ENCODE measurements at regions of chr12 and their contacts with region 1.

Region 1: DNA sequence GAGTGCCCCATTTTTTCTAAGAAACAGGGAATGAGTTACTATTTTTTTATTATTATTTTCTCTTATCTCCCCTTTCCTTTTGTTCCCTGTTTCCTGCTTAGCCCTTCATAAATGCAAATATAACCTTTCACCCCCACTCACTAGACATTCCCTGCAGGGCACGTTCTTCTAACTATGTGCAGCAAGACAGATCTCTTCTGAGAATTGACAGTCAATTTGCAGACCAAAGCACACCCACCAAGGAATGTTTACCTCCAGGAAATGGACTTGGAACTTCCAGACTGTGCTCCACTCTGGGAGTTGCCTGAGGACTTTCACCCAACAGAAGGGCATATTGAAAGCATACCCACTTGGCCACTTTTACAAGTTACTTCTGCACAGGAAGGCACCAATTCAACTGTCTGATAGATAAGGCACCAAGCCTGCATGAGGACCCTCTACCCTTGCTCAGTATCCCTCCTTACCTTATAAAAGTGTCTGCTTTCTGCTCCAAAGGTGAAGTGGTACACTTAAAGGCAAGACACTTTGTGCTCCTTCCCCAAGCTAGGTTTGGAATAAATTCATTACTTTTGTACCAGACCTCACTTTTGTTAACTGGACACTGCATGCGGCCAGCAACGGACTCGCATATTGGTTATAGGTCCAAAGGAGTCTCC is 6.5 kb downstream of the TAS2R19 start:
- DNase-seq: no peak
- ATAC-seq: no peak
- H3K4me3 ChIP-seq: no peak overlapping the region
- H3K27ac ChIP-seq: no peak overlapping the region
- H3K4me1 ChIP-seq: no peaks in the 10 kb centered on the region
- H3K27me3 ChIP-seq: no peaks in the 10 kb centered on the region
- CTCF ChIP-seq: no peak
- POLR2A ChIP-seq: no peak
- RAD21 ChIP-seq: no peak

Region 2: DNA sequence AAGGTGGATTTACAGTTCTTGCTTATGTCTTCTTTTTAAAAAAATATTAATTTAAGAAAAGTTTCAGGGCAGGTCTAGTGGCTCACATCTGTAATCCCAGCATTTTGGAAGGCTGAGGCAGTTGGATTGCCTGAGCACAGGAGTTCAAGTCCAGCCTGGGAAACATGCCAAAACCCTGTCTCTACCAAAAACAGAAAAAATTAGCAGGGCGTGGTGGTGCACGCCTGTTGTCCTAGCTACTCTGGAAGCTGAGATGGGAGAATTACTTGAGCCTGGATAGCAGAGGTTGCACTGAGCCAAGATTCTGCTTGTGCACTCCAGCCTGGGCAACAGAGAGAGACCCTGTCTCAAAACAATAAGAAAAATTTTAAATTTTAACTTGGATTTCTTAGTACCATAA is 51.6 kb after region 1 on chr12:
- CTCF ChIA-PET with region 1: no interaction called
- POLR2A ChIA-PET with region 1: no interaction called
- RAD21 ChIA-PET with region 1: no interaction called
- intact Hi-C with region 1: loop called (anchors 2 kb)
- DNase-seq: no peak
- ATAC-seq: no peak
- H3K4me3 ChIP-seq: no peak overlapping the region
- H3K27ac ChIP-seq: no peak overlapping the region
- H3K4me1 ChIP-seq: peaks cover 7 to 9% of the 10 kb centered on the region in 2 experiments
- H3K27me3 ChIP-seq: no peaks in the 10 kb centered on the region
- CTCF ChIP-seq: no peak
- POLR2A ChIP-seq: no peak
- RAD21 ChIP-seq: no peak

Measured in HCT116 (cell line).